ENCODE measurements at regions of chr5 and their contacts with region 1.

Region 1: GRCh38 chr5:68252673-68253623 is 37.4 kb downstream of the PIK3R1 start:
- DNase-seq: peak in 7 of 9 experiments; percentile 28 to 71 (median 56)
- ATAC-seq: no peak
- H3K4me3 ChIP-seq: no peak overlapping the region
- H3K4me3 Mint-ChIP-seq: no peak overlapping the region
- H3K27ac ChIP-seq: peak overlapping the region in 1 of 2 experiments; percentile 8
- H3K27ac Mint-ChIP-seq: peak overlapping the region; percentile 22
- H3K4me1 ChIP-seq: peaks cover 81% of the 10 kb centered on the region
- H3K4me1 Mint-ChIP-seq: peaks cover 91% of the 10 kb centered on the region
- H3K27me3 ChIP-seq: no peaks in the 10 kb centered on the region
- H3K27me3 Mint-ChIP-seq: no peaks in the 10 kb centered on the region
- CTCF ChIP-seq: peak; percentile 78

Region 2: GRCh38 chr5:67165526-67166459 is 1087.2 kb before region 1 on chr5:
- CTCF ChIA-PET with region 1: interaction called, 3 read pairs
- POLR2A ChIA-PET with region 1: no interaction called
- intact Hi-C with region 1: loop called in 1 of 2 experiments (anchors 5 kb)
- DNase-seq: peak; percentile 65 to 89 (median 82)
- ATAC-seq: peak; percentile 78
- H3K4me3 ChIP-seq: peak overlapping the region; percentile 52 to 54
- H3K4me3 Mint-ChIP-seq: peak overlapping the region; percentile 84
- H3K27ac ChIP-seq: peak overlapping the region; percentile 65 to 85
- H3K27ac Mint-ChIP-seq: peak overlapping the region; percentile 97
- H3K4me1 ChIP-seq: peaks cover 65% of the 10 kb centered on the region
- H3K4me1 Mint-ChIP-seq: peaks cover 68% of the 10 kb centered on the region
- H3K27me3 ChIP-seq: no peaks in the 10 kb centered on the region
- H3K27me3 Mint-ChIP-seq: no peaks in the 10 kb centered on the region
- CTCF ChIP-seq: peak; percentile 73

Region 3: DNA sequence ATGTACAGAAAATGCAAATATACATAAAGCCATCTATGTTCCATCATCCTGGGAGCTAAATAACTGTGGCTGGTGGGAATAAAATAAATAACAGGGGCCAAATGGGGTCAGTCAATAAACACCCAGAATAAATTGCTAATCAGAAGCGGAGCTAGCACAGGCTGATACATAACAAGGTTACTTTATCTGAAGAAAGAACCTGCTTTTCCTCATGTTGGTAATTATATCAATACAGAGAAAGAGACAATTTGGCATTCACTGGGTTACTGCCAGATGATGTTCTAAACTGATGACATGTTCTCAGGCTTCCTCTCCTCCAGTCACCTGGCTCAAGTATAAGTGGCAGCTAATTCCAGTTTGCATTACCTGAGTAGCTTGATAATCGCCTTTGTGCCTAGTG is 911.5 kb before region 1 on chr5:
- CTCF ChIA-PET with region 1: no interaction called
- POLR2A ChIA-PET with region 1: no interaction called
- intact Hi-C with region 1: loop called in 1 of 2 experiments (anchors 10 kb)
- DNase-seq: no peak
- ATAC-seq: no peak
- H3K4me3 ChIP-seq: no peak overlapping the region
- H3K4me3 Mint-ChIP-seq: no peak overlapping the region
- H3K27ac ChIP-seq: no peak overlapping the region
- H3K27ac Mint-ChIP-seq: no peak overlapping the region
- H3K4me1 ChIP-seq: no peaks in the 10 kb centered on the region
- H3K4me1 Mint-ChIP-seq: no peaks in the 10 kb centered on the region
- H3K27me3 ChIP-seq: peaks cover 0 to 2% of the 10 kb centered on the region in 2 experiments
- H3K27me3 Mint-ChIP-seq: peaks cover 5% of the 10 kb centered on the region
- CTCF ChIP-seq: no peak

Region 4: DNA sequence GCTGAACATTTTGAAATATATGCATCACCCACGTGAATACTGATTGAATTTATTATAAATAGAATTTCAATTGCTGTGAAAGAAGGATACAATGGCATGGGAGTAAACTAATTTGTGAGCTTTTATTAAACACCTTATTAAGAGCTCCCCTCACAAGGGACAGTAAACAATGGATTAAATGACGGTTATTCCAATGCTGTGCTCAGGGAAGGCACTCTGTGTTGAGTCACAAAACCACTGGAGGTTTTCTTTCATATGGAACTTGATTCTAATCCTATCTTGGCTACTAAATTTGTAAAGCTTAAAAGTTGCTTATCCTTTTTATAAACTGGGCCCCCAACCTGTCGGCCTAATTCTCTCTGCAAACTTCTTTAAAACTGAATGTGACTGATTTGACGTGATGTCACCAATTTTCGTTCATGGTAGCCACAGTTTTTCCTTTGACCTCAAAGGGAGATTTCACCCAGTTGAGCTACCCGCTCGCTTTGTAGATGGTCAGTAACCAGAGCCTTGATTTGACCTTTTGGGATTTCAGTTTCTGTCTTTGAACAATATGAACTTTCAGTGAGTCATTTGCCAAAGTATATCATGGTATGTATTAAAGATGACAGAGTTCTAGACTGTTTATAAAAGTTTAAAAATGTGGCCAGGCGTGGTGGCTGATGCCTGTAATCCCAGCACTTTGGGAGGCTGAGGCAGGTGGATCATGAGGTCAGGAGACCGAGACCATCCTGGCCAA is 98.7 kb before region 1 on chr5:
- CTCF ChIA-PET with region 1: no interaction called
- POLR2A ChIA-PET with region 1: no interaction called
- intact Hi-C with region 1: loop called in 1 of 2 experiments (anchors 5 kb)
- DNase-seq: no peak
- ATAC-seq: no peak
- H3K4me3 ChIP-seq: no peak overlapping the region
- H3K4me3 Mint-ChIP-seq: no peak overlapping the region
- H3K27ac ChIP-seq: no peak overlapping the region
- H3K27ac Mint-ChIP-seq: no peak overlapping the region
- H3K4me1 ChIP-seq: no peaks in the 10 kb centered on the region
- H3K4me1 Mint-ChIP-seq: no peaks in the 10 kb centered on the region
- H3K27me3 ChIP-seq: no peaks in the 10 kb centered on the region
- H3K27me3 Mint-ChIP-seq: no peaks in the 10 kb centered on the region
- CTCF ChIP-seq: no peak

Region 5: DNA sequence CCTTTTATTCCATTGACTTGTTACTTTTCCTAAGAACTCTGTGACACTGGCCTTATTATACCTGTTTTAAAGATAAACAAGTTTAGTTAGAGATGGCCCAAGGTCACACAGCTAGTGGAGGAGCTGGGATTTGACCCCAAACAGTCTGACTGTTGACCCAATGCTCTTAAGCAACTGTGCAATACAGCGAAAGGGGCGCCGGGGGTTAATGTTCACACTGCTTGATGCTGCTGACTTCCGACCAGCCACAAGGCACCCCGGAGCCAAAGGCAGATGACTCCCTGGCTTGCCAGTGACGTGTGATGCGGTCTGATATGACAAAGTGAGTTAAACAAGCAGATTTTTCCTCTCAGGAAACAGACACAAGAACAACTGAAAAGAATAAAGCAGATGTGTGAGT is 13.5 kb before region 1 on chr5:
- CTCF ChIA-PET with region 1: interaction called, 11 read pairs
- POLR2A ChIA-PET with region 1: interaction called, 4 read pairs
- intact Hi-C with region 1: loop called in 1 of 2 experiments (anchors 1 kb)
- DNase-seq: peak; percentile 62 to 94 (median 83)
- ATAC-seq: peak; percentile 95
- H3K4me3 ChIP-seq: no peak overlapping the region
- H3K4me3 Mint-ChIP-seq: peak overlapping the region; percentile 66
- H3K27ac ChIP-seq: peak overlapping the region; percentile 5 to 78
- H3K27ac Mint-ChIP-seq: peak overlapping the region; percentile 89
- H3K4me1 ChIP-seq: peaks cover 63% of the 10 kb centered on the region
- H3K4me1 Mint-ChIP-seq: peaks cover 86% of the 10 kb centered on the region
- H3K27me3 ChIP-seq: no peaks in the 10 kb centered on the region
- H3K27me3 Mint-ChIP-seq: no peaks in the 10 kb centered on the region
- CTCF ChIP-seq: no peak

Region 6: DNA sequence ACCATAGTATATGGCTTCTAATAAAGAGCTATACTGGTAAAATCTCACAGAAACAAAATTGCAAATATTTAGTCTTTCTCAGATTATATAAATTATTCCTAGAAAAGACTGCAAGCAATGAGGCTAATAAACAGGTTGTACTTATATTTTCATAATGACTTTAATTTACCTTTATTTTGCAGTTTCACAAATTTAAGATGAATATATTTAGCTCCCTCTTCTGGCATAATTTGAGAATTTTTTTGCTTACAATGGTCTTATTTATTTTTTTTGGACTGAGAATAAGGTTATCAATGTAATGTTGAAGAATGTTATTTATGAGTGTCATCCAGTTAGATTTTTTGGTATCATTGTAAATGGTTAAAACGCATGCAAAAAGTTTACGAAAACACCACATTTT is 19.3 kb after region 1 on chr5:
- CTCF ChIA-PET with region 1: interaction called, 91 read pairs
- POLR2A ChIA-PET with region 1: interaction called, 3 read pairs
- intact Hi-C with region 1: loop called in 1 of 2 experiments (anchors 2 kb)
- DNase-seq: peak in 2 of 9 experiments; percentile 38 to 58
- ATAC-seq: no peak
- H3K4me3 ChIP-seq: no peak overlapping the region
- H3K4me3 Mint-ChIP-seq: no peak overlapping the region
- H3K27ac ChIP-seq: no peak overlapping the region
- H3K27ac Mint-ChIP-seq: peak overlapping the region; percentile 52
- H3K4me1 ChIP-seq: peaks cover 64% of the 10 kb centered on the region
- H3K4me1 Mint-ChIP-seq: peaks cover 76% of the 10 kb centered on the region
- H3K27me3 ChIP-seq: no peaks in the 10 kb centered on the region
- H3K27me3 Mint-ChIP-seq: no peaks in the 10 kb centered on the region
- CTCF ChIP-seq: peak; percentile 66